HCT116 (cell line): ENCODE measurements at regions of chr14 and their contacts with region 1.

Region 1: DNA sequence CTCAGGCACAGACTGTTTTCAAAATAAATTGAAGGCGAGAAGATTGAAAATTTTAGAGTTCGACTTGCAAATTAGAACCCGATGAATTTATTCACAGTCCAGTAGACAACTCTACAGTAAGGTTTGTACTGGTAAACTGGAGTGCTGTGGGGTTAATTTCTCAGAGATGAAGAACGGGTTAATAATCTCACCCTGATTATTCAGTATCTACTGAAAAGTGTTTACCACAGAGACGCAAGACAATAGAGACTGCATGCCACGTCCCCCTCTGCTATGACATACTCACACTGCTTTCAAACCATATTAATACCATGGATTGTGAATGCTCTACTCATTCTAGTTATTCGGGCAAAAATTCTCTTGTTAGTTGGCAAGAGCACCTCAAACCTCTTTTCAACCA is 36.1 kb downstream of the CFL2 start:
- DNase-seq: no peak
- ATAC-seq: 0 out of 2 replicates have a peak, but pooled peaks have one; percentile 33
- H3K4me3 ChIP-seq: no peak overlapping the region
- H3K27ac ChIP-seq: no peak overlapping the region
- H3K4me1 ChIP-seq: peaks cover 10 to 21% of the 10 kb centered on the region in 2 experiments
- H3K27me3 ChIP-seq: no peaks in the 10 kb centered on the region
- CTCF ChIP-seq: no peak
- POLR2A ChIP-seq: no peak
- RAD21 ChIP-seq: no peak

Region 2: DNA sequence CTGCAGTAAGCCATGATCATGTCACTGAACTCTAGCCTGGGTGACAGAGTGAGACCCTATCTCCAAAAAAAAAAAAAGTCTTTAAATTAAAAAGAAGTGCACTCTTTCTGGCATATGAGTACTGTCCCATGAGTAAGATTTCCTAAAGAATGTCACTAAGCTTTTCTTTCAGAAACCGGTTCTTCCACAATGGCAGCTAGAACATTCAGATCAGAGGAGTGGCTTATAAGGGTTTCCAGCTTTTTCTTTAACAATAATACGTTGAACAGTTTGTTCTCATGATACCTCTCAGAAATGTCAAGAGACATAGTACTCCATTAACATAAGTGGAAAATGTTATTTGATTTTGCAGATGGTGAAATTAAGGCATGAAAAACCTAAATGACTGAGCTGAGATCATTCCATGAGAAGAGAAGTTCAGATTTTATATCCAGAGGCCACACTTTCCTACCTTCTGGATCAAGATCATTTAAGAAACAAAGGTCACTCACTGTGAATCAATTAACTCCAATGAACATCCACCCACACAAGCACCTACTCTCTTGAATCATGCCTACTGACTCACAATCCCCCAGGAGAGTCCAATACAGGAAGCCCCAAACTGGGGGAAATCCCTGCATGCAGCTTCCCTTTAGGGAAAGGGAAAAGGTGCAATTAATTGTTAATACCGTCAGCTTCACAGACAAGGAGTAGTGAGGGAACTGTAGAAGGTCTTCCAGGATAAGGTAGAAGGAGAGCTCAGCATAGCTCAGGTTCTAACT is 303.1 kb before region 1 on chr14:
- CTCF ChIA-PET with region 1: no interaction called
- POLR2A ChIA-PET with region 1: no interaction called
- RAD21 ChIA-PET with region 1: no interaction called
- intact Hi-C with region 1: no loop called
- DNase-seq: no peak
- ATAC-seq: no peak
- H3K4me3 ChIP-seq: no peak overlapping the region
- H3K27ac ChIP-seq: no peak overlapping the region
- H3K4me1 ChIP-seq: peaks cover 2 to 11% of the 10 kb centered on the region in 2 experiments; a peak in 3 of 4 replicates
- H3K27me3 ChIP-seq: no peaks in the 10 kb centered on the region
- CTCF ChIP-seq: no peak
- POLR2A ChIP-seq: no peak
- RAD21 ChIP-seq: no peak

Region 3: GRCh38 chr14:34875031-34875922 is 197.0 kb after region 1 on chr14 and contains the start of gene BAZ1A:
- CTCF ChIA-PET with region 1: no interaction called
- POLR2A ChIA-PET with region 1: no interaction called
- RAD21 ChIA-PET with region 1: no interaction called
- intact Hi-C with region 1: loop called (anchors 10 kb)
- DNase-seq: peak; percentile 72
- ATAC-seq: peak; percentile 75
- H3K4me3 ChIP-seq: peak within 1 kb of the TSS; percentile 54 to 91
- H3K27ac ChIP-seq: peak within 1 kb of the TSS; percentile 99
- H3K4me1 ChIP-seq: peaks cover 11 to 15% of the 10 kb centered on the region in 2 experiments; a peak in 3 of 4 replicates
- H3K27me3 ChIP-seq: no peaks in the 10 kb centered on the region
- CTCF ChIP-seq: no peak
- POLR2A ChIP-seq: peak; percentile 95
- RAD21 ChIP-seq: no peak
- total RNA-seq, gene BAZ1A: 24.2 TPM